Activated naive CD8-positive, alpha-beta T cell treated with anti-CD3 and anti-CD28 coated beads, Interleukin-2, amount 10 ng/mL, durations not matched to agents 7 days and 5 days (primary cell): ENCODE measurements at regions of chr5 and their contacts with region 1.

Region 1: DNA sequence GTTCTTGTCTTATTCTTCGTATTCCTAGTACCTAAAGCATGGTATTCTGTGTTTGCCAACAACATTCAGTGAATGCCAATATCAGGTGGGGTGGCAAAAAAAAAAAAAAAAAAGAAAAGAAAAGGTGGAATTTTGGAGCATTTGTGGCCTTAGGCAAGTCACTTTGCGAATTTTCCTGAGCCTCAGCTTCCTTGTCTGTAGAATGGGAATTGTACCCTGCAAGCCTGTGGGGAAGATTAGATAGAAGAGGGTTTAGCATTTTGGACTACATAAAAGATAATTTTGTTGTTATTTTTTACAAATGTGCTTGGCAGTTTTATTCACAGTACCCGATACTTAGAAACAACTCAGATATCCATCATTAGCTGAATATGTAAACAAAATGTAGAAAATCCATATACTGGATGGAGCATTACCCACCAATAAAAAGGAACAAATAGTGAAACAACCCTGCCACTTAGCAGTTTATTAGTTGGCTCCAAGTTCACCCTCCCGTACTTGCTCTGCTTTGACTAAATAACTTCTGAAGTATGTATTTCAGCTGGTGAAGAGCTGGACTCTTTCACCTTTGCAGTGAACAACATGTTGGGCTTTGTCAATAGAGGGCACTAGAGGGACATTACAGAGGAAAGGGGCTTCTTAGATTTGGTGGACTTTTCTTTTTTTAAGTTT is 13.6 kb downstream of the UBE2D2 start:
- DNase-seq: no peak
- ATAC-seq: peak; percentile 56
- H3K4me3 Mint-ChIP-seq: peak overlapping the region; percentile 13
- H3K27ac Mint-ChIP-seq: peak overlapping the region; percentile 63
- H3K4me1 Mint-ChIP-seq: peaks cover 61% of the 10 kb centered on the region
- H3K27me3 Mint-ChIP-seq: no peaks in the 10 kb centered on the region

Region 2: DNA sequence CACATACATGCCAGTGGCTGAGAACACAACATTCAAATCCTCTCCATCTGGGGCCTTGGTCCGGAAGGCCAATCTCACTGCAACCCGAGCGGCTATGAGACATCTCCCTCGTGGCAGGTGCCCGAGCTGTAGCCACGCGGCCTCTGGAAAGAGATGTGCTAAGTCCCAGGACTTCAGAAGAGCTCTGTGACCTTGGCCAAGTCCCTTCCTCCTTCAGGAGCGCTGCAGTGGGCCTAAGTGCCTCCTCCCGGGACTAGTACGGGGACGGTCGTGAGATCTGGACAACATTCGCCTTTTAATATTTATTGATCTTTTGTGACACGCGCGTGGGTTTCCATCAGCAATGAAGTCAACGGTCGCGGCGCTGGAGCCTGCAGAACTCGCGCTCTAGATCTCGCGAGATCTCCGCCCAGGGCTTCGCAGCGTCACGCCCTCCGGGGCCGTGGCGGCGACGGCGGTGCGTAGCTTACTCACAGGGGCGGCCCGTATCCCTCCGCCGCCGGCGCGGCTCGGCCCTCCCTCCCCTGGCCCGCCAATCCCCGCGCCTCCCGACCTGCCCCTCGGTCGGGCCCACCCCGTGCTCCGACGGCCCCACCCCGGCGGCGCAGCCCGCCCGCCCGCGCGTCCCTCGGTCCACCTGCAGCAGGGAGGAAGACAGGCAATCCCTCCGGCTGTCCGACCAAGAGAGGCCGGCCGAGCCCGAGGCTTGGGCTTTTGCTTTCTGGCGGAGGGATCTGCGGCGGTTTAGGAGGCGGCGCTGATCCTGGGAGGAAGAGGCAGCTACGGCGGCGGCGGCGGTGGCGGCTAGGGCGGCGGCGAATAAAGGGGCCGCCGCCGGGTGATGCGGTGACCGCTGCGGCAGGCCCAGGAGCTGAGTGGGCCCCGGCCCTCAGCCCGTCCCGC is 13.8 kb before region 1 on chr5 and contains the start of gene UBE2D2:
- POLR2A ChIA-PET with region 1: interaction called, 33 read pairs
- DNase-seq: peak; percentile 99
- ATAC-seq: peak; percentile 85
- H3K4me3 Mint-ChIP-seq: peak within 1 kb of the TSS; percentile 100
- H3K27ac Mint-ChIP-seq: peak within 1 kb of the TSS; percentile 98
- H3K4me1 Mint-ChIP-seq: peaks cover 29% of the 10 kb centered on the region
- H3K27me3 Mint-ChIP-seq: no peaks in the 10 kb centered on the region
- total RNA-seq, gene UBE2D2: 200 to 217 TPM

Region 3: DNA sequence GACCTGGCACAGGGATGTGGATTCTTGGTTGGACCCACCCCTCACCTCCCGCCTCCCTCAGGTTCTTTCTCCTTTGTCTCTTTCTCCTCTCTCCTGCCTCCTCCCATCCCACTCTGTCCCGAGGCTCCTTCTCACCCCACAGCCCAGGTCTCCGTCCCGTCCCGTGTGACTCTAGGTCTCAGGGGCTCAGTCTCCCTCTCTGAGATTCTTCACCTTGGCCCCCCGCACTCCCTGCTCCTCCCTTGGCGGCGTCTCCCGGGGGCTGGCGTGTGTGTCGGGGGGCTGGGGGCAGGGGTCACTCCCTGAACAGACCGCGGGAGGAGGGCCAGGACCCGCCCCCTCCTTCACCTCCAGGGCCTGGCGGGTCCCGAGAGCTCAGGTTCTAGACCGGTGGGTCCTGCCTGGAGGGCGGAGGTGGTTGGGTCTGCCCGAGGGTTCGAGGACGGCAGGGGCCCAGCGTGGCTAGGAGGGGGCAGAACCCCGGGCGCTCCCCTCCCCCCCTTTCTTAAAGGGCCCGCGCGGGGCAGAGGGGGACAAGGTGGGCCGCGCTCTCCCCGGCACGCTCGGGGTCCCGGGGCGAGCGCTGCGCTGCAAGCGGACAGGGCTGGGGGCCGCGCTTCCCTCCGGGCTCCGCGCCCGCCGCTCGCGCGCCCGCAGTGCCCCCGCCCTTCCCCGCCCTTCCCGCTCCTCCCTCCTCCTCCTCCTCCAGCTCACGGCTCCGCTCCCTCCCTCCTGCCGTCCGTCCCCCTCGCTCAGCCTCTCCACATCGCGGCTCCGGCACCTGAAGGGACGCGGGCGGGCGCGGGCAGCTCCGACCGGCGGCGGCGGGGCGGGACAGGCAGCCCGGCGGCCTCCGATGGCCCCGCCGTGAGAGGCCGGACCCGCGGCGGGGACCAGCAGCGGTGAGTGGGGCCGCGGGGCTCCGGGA is 220.6 kb after region 1 on chr5 and contains the start of gene PSD2:
- POLR2A ChIA-PET with region 1: no interaction called
- DNase-seq: no peak
- ATAC-seq: peak; percentile 25
- H3K4me3 Mint-ChIP-seq: no peak within 1 kb of the TSS
- H3K27ac Mint-ChIP-seq: no peak within 1 kb of the TSS
- H3K4me1 Mint-ChIP-seq: no peaks in the 10 kb centered on the region
- H3K27me3 Mint-ChIP-seq: peaks cover 58% of the 10 kb centered on the region
- total RNA-seq, gene PSD2: 0.08 to 0.09 TPM